H1 (cell line): ENCODE measurements at regions of chr10 and their contacts with region 1.

Region 1: GRCh38 chr10:49620841-49621378 is 7.1 kb downstream of the CHAT start:
- DNase-seq: no peak
- H3K4me3 ChIP-seq: no peak overlapping the region
- H3K27ac ChIP-seq: no peak overlapping the region
- H3K4me1 ChIP-seq: no peaks in the 10 kb centered on the region
- H3K27me3 ChIP-seq: peaks cover 4 to 29% (median 22%) of the 10 kb centered on the region in 4 experiments
- CTCF ChIP-seq: no peak
- EP300 ChIP-seq: no peak
- POLR2A ChIP-seq: no peak
- RAD21 ChIP-seq: no peak

Region 2: GRCh38 chr10:49646256-49646861 is 25.4 kb after region 1 on chr10:
- CTCF ChIA-PET with region 1: interaction called, 13 read pairs
- POLR2A ChIA-PET with region 1: no interaction called
- DNase-seq: no peak
- H3K4me3 ChIP-seq: no peak overlapping the region
- H3K27ac ChIP-seq: no peak overlapping the region
- H3K4me1 ChIP-seq: peaks cover 0 to 4% (median 1%) of the 10 kb centered on the region in 4 experiments; a peak in 1 of 7 replicates
- H3K27me3 ChIP-seq: no peaks in the 10 kb centered on the region; a peak in 2 of 7 replicates
- CTCF ChIP-seq: no peak
- EP300 ChIP-seq: no peak
- POLR2A ChIP-seq: no peak
- RAD21 ChIP-seq: no peak